Right ventricle myocardium superior (tissue), 1 donor: ENCODE measurements at regions of chr3 and their contacts with region 1.

Region 1: DNA sequence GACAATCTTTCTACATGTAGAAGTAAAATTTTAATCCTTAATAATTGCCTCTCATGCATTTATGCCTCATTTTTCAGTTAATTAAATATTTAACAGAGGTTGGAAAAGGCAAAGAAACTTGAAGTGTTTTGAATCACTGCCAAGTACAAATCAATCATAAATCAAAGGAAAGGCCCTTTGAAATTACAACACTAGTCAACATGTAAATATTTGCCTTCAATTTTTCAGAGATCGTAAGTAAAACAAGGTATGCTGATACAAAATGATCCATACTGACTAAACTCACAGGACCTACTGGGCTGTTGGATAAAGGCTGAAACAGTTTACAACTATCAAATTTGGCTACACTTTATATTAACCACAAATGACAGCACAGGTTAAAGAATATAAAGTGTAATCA is 33.9 kb downstream of the ZBBX start:
- DNase-seq: no peak
- ATAC-seq: no peak

Region 2: DNA sequence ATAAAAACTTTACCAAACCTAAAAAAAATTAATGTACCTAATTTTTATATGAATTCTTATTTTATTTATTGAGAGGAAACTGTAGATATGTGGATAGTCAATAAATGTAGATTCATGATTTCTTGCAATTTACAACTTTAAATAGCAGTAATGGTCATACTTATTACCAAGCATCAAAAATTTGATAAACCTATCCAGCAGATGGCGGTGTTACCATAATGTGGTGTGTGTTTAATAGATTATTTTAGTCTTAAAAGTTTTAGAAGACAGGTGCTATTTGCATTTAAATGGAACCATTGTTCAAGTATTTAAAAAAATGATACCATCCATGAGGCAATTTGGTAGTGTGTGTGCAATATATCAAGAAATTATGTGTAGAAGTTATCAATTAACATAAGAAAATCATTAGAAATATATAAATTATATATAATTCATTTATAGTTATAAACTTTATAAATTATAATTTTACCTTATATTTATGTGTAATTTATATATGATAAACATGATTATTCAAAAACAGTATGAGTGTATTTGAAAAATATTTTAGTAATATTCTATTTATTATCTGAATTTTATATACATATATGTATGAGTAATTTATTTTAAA is 1333.0 kb before region 1 on chr3:
- intact Hi-C with region 1: loop called (anchors 10 kb)
- DNase-seq: no peak
- ATAC-seq: no peak

Region 3: DNA sequence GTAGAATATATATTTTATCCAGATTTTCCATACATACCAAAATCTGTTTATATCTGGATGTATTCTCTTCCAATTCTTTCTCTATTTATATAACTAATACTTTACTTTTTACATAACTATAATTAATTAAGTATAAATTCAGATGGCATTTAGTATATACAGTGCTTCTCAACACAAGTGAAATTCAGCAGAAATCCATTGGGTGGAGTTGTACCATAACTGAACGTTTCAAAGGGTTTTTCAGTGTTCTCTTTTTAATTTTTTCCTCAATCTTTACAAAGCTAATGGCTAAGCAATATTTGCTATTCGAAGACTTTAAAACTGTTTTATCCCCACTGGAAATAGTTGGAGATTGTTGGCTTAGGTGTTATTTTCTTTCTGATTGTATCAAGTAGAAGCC is 47.8 kb after region 1 on chr3:
- intact Hi-C with region 1: no loop called
- DNase-seq: no peak
- ATAC-seq: no peak

Region 4: GRCh38 chr3:167700046-167700445 is 353.9 kb after region 1 on chr3:
- intact Hi-C with region 1: no loop called
- DNase-seq: no peak
- ATAC-seq: no peak